ENCODE measurements at regions of chr10 and their contacts with region 1.

Region 1: DNA sequence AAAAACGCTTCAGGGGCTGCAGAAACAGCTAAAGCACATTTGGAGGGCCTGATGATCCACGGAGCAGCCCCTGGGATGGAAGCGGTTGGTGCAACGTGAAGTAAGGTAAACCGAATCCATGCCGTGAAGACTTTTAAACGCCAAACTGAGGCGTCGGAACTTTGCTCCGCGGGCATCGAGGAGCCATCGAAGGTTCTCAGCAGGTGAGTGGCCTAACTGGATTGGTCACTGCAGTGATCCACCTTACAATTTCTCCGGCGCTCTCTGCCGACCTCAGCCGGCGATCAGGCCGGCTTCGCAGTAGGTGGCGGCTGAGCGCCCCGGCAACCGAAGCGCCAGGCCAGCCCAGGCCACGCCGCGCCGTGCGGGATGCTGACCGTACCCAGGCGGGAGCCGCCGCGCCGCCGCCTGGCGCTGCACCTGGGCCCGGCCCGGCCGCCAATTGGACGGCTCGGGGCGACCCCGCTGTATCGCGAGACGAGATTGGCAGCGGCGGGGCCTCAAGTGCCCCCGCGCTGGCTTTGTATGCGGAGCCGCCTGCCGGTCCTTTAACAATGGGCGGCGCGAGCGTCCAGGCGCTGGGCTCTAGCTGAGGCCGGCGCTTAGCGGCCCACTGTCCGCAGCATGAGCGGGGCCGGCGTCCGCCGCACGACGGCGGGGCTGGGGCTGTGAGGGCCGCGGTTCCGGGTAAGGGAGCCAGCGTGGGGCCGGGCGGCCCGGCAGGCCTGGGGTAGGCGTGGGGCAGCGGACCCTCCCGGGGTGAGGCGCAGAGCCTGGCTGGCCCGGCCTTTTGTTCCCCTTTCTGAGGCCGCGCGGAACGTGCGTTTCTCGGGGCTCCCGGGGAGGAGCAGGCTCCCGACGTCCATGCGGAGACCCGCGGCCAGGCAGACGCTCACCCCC is at the start of gene CCNJ:
- DNase-seq: peak; percentile 90
- ATAC-seq: peak; percentile 93
- H3K4me3 Mint-ChIP-seq: peak within 1 kb of the TSS; percentile 93
- H3K27ac Mint-ChIP-seq: peak within 1 kb of the TSS; percentile 79
- H3K4me1 Mint-ChIP-seq: peaks cover 39% of the 10 kb centered on the region
- H3K27me3 Mint-ChIP-seq: no peaks in the 10 kb centered on the region
- total RNA-seq, gene CCNJ: 4.4 to 4.5 TPM

Region 2: DNA sequence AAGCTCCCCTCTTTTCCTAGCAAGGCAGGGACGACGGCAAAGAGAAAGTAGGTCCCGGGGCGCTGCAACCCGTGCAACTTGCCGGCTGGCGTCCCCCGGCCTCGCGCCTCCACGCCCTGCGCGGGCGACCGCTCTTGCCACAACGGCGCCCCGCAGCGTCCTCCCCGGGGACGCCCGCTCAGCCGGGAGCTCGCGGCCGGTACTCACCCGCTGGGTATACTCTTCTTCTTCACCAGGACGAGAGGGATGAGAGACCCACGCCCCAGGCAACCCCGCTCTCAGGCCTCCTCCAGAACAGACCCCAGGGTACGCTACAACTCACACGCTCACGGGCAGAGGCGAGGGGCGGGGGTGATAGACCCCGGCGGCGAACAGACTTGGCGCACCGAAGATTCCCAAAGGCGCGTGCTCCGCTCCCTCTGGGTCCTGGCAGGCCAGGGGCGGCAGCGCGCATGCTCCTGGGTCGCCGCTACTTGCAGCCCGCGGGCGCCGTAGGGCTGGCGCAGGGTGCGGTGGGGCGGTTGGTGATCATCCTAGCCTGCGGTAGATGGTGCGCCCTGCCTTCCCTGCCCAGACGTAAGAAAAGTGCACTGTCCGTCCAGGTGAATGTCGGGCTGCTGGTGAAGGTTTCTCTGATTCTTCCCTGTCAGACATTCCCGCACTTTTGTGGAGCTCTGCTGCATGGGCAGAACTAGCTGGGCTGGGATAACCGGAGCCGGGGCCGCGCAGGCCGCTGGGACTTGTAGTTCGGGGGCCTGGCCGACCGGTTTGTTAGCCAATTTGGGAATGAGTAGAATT is 135.6 kb before region 1 on chr10 and contains the start of gene CC2D2B:
- CTCF ChIA-PET with region 1: no interaction called
- POLR2A ChIA-PET with region 1: no interaction called
- intact Hi-C with region 1: loop called in 1 of 2 experiments (anchors 5 kb)
- DNase-seq: peak; percentile 85
- ATAC-seq: peak; percentile 94
- H3K4me3 Mint-ChIP-seq: peak within 1 kb of the TSS; percentile 88
- H3K27ac Mint-ChIP-seq: peak within 1 kb of the TSS; percentile 96
- H3K4me1 Mint-ChIP-seq: peaks cover 9% of the 10 kb centered on the region
- H3K27me3 Mint-ChIP-seq: peaks cover 2% of the 10 kb centered on the region
- total RNA-seq, gene CC2D2B: 0.23 TPM in 1 of 2 experiments, not detected in the other